T-cell (primary cell): ENCODE measurements at regions of chr1 and their contacts with region 1.

Region 1: GRCh38 chr1:37458528-37458927 is 15.9 kb upstream of the ZC3H12A start:
- DNase-seq: peak in 1 of 35 experiments; percentile 35
- ATAC-seq: peak in 2 of 4 experiments; percentile 34 to 56
- H3K4me3 ChIP-seq: no peak overlapping the region
- H3K4me3 Mint-ChIP-seq: no peak overlapping the region
- H3K27ac ChIP-seq: no peak overlapping the region
- H3K27ac Mint-ChIP-seq: no peak overlapping the region
- H3K4me1 ChIP-seq: peaks cover 0 to 8% of the 10 kb centered on the region in 2 experiments
- H3K4me1 Mint-ChIP-seq: peaks cover 8 to 10% (median 8%) of the 10 kb centered on the region in 3 donors
- H3K27me3 ChIP-seq: no peaks in the 10 kb centered on the region
- H3K27me3 Mint-ChIP-seq: no peaks in the 10 kb centered on the region

Region 2: GRCh38 chr1:37001703-37002102 is 456.8 kb before region 1 on chr1:
- CTCF ChIA-PET with region 1: no interaction called
- POLR2A ChIA-PET with region 1: no interaction called
- DNase-seq: no peak
- ATAC-seq: no peak
- H3K4me3 ChIP-seq: no peak overlapping the region
- H3K4me3 Mint-ChIP-seq: no peak overlapping the region
- H3K27ac ChIP-seq: no peak overlapping the region
- H3K27ac Mint-ChIP-seq: no peak overlapping the region
- H3K4me1 ChIP-seq: no peaks in the 10 kb centered on the region
- H3K4me1 Mint-ChIP-seq: peaks cover 0 to 6% (median 0%) of the 10 kb centered on the region in 3 donors
- H3K27me3 ChIP-seq: peaks cover 0 to 13% of the 10 kb centered on the region in 2 experiments
- H3K27me3 Mint-ChIP-seq: peaks cover 19 to 20% of the 10 kb centered on the region in 2 donors

Region 3: DNA sequence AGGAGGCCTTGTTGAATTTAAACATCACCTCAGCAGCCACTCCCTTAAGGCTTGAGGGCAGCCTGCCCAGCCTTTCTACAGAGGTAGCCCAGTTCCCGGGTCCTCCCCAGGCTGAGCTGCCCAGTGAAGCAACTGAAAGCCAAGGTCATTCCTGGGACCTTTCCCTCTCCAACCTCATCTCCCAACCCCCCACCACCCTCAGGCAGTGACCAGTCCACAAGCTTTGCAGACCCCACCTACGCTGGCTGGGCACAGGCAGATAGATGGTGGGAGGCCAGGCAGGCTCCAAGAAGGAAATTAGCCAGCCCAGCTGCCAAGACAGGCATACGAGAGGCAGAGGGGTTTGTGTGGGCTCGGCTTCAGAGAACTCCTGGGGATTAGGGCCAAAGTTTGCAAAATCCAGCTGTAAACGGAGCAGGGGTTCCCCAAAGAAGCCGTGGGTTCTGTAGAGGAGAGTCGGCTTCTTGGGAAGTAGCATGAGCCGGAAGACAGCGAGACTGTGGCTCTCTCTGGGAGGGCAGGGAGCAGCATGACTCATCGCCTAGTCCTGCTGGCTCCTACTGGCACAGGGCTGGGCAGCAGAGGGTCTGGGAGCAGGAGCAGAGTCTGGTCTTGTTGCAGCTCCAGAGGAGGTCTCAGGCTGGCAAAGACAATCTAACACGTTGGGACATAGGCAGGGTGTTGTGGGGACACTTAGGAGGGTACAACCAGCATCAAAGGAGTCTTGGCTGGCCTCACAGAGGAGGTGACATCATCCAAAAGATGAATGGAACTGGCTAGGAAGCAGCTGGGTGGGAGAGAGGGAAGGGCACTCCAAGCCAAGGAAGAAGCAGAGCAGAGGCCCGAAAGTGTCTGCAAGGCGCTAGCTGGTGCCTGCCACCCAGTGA is 13.1 kb after region 1 on chr1:
- CTCF ChIA-PET with region 1: interaction called, 8 to 10 read pairs
- POLR2A ChIA-PET with region 1: interaction called in 1 of 2 experiments, 8 read pairs
- DNase-seq: no peak
- ATAC-seq: no peak
- H3K4me3 ChIP-seq: no peak overlapping the region
- H3K4me3 Mint-ChIP-seq: peak overlapping the region in 2 of 3 donors; percentile 80 to 92
- H3K27ac ChIP-seq: peak overlapping the region; percentile 68
- H3K27ac Mint-ChIP-seq: peak overlapping the region; percentile 93 to 95
- H3K4me1 ChIP-seq: peaks cover 22 to 45% of the 10 kb centered on the region in 2 experiments
- H3K4me1 Mint-ChIP-seq: peaks cover 38 to 46% (median 39%) of the 10 kb centered on the region in 3 donors
- H3K27me3 ChIP-seq: no peaks in the 10 kb centered on the region
- H3K27me3 Mint-ChIP-seq: no peaks in the 10 kb centered on the region

Region 4: DNA sequence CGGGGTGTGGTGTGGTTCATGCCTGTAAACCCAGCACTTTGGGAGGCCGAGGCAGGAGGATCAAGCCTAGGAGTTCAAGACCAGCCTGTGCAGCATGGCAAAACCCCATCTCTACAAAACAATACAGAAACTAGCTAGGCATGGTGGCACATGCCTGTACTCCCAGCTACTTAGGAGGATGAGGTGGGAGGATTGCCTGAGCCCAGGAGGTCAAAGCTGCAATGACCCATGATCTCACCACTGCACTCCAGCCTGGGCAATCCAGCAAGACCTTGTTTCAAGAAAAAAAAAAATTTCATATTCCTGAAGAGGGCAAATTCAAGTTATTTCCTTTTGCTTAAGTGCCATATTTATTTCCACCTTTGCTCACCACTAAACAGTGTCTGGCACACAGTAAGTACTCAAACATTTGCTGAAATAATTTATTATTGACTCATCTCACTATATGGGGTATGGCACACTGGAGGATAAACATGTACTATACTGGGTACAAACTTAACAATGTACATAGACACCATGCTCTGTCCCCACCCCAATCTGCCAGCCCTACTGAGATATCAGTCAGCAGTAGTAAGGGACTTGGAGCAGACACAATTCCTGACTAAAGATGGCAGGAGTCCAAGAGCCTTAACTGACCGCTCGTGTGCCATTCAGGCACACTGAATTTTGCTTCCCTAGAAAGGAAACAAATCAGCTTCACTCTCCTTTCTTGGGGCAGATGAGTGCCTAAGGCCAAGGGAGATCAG is 40.5 kb after region 1 on chr1:
- CTCF ChIA-PET with region 1: no interaction called
- POLR2A ChIA-PET with region 1: interaction called in 1 of 2 experiments, 15 read pairs
- DNase-seq: no peak
- ATAC-seq: no peak
- H3K4me3 ChIP-seq: no peak overlapping the region
- H3K4me3 Mint-ChIP-seq: no peak overlapping the region
- H3K27ac ChIP-seq: no peak overlapping the region
- H3K27ac Mint-ChIP-seq: peak overlapping the region in 1 of 2 donors; percentile 45
- H3K4me1 ChIP-seq: no peaks in the 10 kb centered on the region
- H3K4me1 Mint-ChIP-seq: peaks cover 5 to 18% (median 14%) of the 10 kb centered on the region in 3 donors
- H3K27me3 ChIP-seq: no peaks in the 10 kb centered on the region
- H3K27me3 Mint-ChIP-seq: no peaks in the 10 kb centered on the region